ENCODE measurements at regions of chr9 and their contacts with region 1.

Region 1: DNA sequence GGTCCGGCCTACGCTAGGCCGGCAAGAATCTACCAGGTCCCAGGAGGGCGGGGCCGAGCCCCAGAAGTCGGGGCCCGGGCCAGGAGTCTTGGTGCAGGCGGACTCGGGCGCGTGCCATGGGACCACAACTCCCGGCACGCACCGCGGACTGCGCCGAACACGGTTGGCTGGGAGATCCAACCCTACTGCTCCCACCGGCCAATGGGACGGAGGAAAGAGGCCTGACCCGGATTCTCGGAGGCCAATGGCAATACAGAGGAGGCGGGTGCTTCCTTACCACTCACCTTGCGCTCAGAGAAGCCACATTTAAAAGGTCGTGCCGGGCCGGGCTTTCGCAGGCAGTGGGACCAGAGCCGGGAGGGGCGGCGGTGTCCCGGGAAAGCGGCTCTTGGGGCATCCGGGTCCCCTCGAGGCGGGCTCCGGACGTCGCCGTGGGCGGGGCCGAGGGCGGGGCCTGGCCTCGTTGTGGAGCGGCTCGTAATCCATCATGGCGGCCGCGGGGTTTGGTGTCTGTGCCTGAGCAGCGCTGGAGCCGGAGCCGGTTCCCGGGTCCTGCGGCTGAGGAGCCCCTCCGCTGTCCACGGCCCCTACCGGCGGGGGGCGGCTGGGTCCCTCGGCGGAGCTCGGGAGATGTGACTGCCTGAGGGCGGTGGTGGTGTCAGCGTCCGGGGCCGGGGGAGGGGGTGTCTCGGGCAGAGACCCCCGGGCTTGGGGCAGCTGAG is 19.1 kb downstream of the EXOSC2 start:
- DNase-seq: peak; percentile 95
- H3K4me3 Mint-ChIP-seq: peak overlapping the region; percentile 91
- H3K27ac Mint-ChIP-seq: peak overlapping the region; percentile 93
- H3K4me1 Mint-ChIP-seq: peaks cover 29% of the 10 kb centered on the region
- H3K27me3 Mint-ChIP-seq: no peaks in the 10 kb centered on the region

Region 2: GRCh38 chr9:130451509-130452388 is 261.0 kb before region 1 on chr9:
- intact Hi-C with region 1: no loop called
- DNase-seq: no peak
- H3K4me3 Mint-ChIP-seq: no peak overlapping the region
- H3K27ac Mint-ChIP-seq: no peak overlapping the region
- H3K4me1 Mint-ChIP-seq: peaks cover 11% of the 10 kb centered on the region
- H3K27me3 Mint-ChIP-seq: no peaks in the 10 kb centered on the region

Region 3: GRCh38 chr9:130693426-130694191 is 19.1 kb before region 1 on chr9 and contains the start of gene EXOSC2:
- intact Hi-C with region 1: loop called (anchors 1 kb)
- DNase-seq: peak; percentile 89
- H3K4me3 Mint-ChIP-seq: peak within 1 kb of the TSS; percentile 96
- H3K27ac Mint-ChIP-seq: peak within 1 kb of the TSS; percentile 88
- H3K4me1 Mint-ChIP-seq: peaks cover 41% of the 10 kb centered on the region
- H3K27me3 Mint-ChIP-seq: peaks cover 4% of the 10 kb centered on the region
- total RNA-seq, gene EXOSC2: 93.0 and 94.9 TPM in 2 replicates

Region 4: GRCh38 chr9:130834371-130835311 is 121.9 kb after region 1 on chr9 and contains the start of gene ABL1:
- intact Hi-C with region 1: loop called (anchors 10 kb)
- DNase-seq: peak; percentile 49
- H3K4me3 Mint-ChIP-seq: peak within 1 kb of the TSS; percentile 98
- H3K27ac Mint-ChIP-seq: peak within 1 kb of the TSS; percentile 99
- H3K4me1 Mint-ChIP-seq: peaks cover 19% of the 10 kb centered on the region
- H3K27me3 Mint-ChIP-seq: peaks cover 9% of the 10 kb centered on the region
- total RNA-seq, gene ABL1: 35.5 and 36.5 TPM in 2 replicates

Region 5: DNA sequence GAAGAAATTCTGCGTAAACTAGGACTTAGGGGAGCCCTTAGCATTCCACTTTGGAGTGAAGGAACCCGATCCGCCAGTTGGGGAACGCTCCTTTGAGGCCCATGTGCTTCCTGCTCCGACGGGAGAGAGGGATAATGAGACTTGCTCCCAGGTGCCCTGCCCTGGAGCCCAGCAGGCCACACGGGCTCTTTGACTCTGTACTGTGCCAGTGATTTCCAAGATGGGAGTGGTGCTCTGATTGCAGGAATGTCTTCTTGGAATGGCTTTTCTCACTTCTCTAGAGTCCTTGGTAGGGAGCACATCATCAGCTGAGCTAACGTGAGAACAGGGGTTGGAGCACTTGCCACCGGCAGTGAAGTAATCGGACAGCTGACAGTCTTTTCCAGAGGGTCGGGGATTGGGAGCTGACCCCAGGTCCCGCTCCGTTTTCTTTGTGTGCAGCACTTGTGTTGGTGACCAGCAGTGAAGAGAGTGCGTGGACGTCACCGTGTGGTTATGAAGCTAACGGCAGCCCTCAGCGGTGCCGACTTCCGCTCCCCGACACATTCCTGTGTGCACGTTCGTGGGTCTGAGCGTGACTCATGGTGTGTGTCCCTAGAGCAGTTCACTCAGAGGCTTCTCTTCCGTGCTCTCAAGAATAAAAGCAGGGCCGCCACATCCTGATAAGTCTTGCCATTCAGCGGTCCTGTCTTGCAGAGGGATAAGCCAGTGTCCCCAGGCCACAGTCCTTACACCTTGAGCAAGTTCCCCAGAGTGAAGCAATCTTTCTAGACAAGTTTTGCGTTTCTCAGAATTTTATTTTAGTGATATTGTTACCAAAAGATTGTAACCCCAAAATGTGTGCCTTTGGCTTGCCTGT is 148.0 kb after region 1 on chr9:
- intact Hi-C with region 1: loop called (anchors 5 kb)
- DNase-seq: no peak
- H3K4me3 Mint-ChIP-seq: no peak overlapping the region
- H3K27ac Mint-ChIP-seq: no peak overlapping the region
- H3K4me1 Mint-ChIP-seq: no peaks in the 10 kb centered on the region
- H3K27me3 Mint-ChIP-seq: no peaks in the 10 kb centered on the region

Region 6: GRCh38 chr9:131149688-131150053 is 436.9 kb after region 1 on chr9:
- intact Hi-C with region 1: no loop called
- DNase-seq: no peak
- H3K4me3 Mint-ChIP-seq: no peak overlapping the region
- H3K27ac Mint-ChIP-seq: no peak overlapping the region
- H3K4me1 Mint-ChIP-seq: peaks cover 5% of the 10 kb centered on the region
- H3K27me3 Mint-ChIP-seq: no peaks in the 10 kb centered on the region